ENCODE measurements at regions of chr16 and their contacts with region 1.

Region 1: GRCh38 chr16:75224306-75225091 is 5.7 kb downstream of the CTRB1 start:
- DNase-seq: no peak
- H3K4me3 ChIP-seq: no peak overlapping the region
- H3K27ac ChIP-seq: no peak overlapping the region
- H3K4me1 ChIP-seq: no peaks in the 10 kb centered on the region
- H3K27me3 ChIP-seq: no peaks in the 10 kb centered on the region
- CTCF ChIP-seq: no peak

Region 2: DNA sequence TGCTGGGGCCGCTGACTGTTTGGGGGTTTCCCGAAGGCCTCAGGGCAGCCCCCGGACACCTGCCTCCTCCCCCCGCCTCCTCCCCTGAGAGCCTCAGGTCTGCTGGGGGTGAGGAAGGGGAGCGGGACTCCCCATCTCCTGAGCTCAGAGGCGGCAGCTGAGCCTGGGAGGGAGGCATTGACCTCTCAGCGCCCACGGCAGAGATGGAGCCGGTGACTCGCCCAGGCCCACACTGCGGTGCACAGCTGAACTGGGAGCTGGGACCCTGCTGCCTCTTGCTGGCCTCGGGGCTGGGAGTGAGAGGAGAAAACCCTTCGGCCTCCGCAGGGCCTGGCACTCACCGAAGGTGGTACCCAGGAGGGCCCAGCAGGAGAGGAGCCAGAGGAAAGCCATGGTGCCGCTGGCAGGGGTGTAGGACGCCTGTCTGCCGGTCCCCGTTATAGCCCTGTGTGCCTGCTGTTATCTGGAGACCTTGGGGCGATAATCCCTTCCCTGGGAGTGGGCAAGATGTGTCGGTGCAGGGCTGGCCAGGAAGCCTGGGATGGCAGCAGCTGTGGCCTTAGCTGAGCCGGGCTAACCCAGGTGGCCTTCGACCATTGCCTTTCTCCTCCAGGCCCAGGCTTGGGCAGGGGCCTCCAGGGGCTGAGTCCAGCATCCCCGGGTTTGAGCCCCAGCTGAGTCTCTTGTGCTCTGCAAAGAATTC is 17.6 kb before region 1 on chr16 and contains the start of gene CTRB2:
- intact Hi-C with region 1: loop called (anchors 2 kb)
- DNase-seq: no peak
- H3K4me3 ChIP-seq: no peak within 1 kb of the TSS
- H3K27ac ChIP-seq: no peak within 1 kb of the TSS
- H3K4me1 ChIP-seq: no peaks in the 10 kb centered on the region
- H3K27me3 ChIP-seq: no peaks in the 10 kb centered on the region
- CTCF ChIP-seq: no peak
- total RNA-seq, gene CTRB2: 29.1 TPM in 1 of 2 donors, not detected in the other

Measured in colonic mucosa (tissue), 4 donors.